ENCODE measurements at regions of chr2 and their contacts with region 1.

Region 1: DNA sequence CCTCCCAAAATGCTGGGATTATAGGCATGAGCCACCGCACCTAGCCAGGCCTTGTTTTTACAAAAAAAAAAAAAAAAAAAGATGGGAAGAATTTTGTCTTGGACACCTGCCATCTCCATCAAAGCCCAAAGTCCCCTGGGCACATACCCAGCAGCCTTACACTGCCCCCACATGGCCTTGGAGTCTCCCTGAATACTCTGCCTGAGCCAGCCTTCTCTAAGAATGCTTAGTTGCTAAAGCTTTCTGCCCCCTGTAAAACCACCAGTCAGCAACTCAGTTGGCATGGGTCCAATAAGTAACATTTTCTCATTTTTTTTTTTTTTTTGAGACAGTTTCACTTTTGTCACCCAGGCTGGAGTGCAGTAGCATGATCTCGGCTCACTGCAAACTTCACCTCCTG is 40.6 kb downstream of the SPC25 start:
- DNase-seq: peak; percentile 87
- H3K4me3 Mint-ChIP-seq: no peak overlapping the region
- H3K27ac Mint-ChIP-seq: peak overlapping the region; percentile 14
- H3K4me1 Mint-ChIP-seq: peaks cover 33% of the 10 kb centered on the region
- H3K27me3 Mint-ChIP-seq: no peaks in the 10 kb centered on the region
- CTCF ChIP-seq: peak; percentile 67

Region 2: GRCh38 chr2:168773719-168774521 is 75.7 kb before region 1 on chr2:
- CTCF ChIA-PET with region 1: interaction called, 4 read pairs
- intact Hi-C with region 1: loop called (anchors 1 kb)
- DNase-seq: peak; percentile 85
- H3K4me3 Mint-ChIP-seq: no peak overlapping the region
- H3K27ac Mint-ChIP-seq: no peak overlapping the region
- H3K4me1 Mint-ChIP-seq: no peaks in the 10 kb centered on the region
- H3K27me3 Mint-ChIP-seq: no peaks in the 10 kb centered on the region
- CTCF ChIP-seq: peak; percentile 94

Region 3: DNA sequence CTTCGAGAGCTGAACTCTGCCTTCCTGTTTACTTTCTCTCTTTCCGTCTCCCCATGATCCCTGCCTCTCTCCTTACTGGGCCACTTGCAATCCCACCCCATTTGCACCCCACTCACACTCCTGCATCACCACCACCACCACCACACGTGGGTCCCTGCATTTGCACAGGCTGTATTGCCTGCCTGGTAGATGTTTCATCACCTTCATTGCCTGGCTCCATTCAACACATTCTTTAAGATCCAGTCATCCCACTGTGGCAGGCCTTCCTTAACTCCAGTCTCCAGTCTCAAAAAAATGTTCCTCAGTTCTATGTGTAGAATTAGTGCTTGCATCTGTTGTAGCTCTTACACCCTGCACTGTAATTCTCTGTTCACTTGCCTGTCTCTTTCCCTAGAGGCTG is 33.2 kb before region 1 on chr2:
- CTCF ChIA-PET with region 1: interaction called, 3 read pairs
- intact Hi-C with region 1: loop called (anchors 1 kb)
- DNase-seq: peak; percentile 65
- H3K4me3 Mint-ChIP-seq: peak overlapping the region; percentile 14
- H3K27ac Mint-ChIP-seq: peak overlapping the region; percentile 78
- H3K4me1 Mint-ChIP-seq: peaks cover 57% of the 10 kb centered on the region
- H3K27me3 Mint-ChIP-seq: no peaks in the 10 kb centered on the region
- CTCF ChIP-seq: no peak

Region 4: GRCh38 chr2:168874368-168875054 is 24.9 kb after region 1 on chr2:
- CTCF ChIA-PET with region 1: no interaction called
- intact Hi-C with region 1: no loop called
- DNase-seq: no peak
- H3K4me3 Mint-ChIP-seq: no peak overlapping the region
- H3K27ac Mint-ChIP-seq: no peak overlapping the region
- H3K4me1 Mint-ChIP-seq: peaks cover 8% of the 10 kb centered on the region
- H3K27me3 Mint-ChIP-seq: no peaks in the 10 kb centered on the region
- CTCF ChIP-seq: no peak

Region 5: GRCh38 chr2:168920504-168921157 is 71.0 kb after region 1 on chr2:
- CTCF ChIA-PET with region 1: no interaction called
- intact Hi-C with region 1: loop called (anchors 2 kb)
- DNase-seq: peak; percentile 44
- H3K4me3 Mint-ChIP-seq: no peak overlapping the region
- H3K27ac Mint-ChIP-seq: no peak overlapping the region
- H3K4me1 Mint-ChIP-seq: peaks cover 14% of the 10 kb centered on the region
- H3K27me3 Mint-ChIP-seq: no peaks in the 10 kb centered on the region
- CTCF ChIP-seq: peak; percentile 68

Region 6: GRCh38 chr2:168976034-168976654 is 126.5 kb after region 1 on chr2:
- CTCF ChIA-PET with region 1: no interaction called
- intact Hi-C with region 1: no loop called
- DNase-seq: no peak
- H3K4me3 Mint-ChIP-seq: no peak overlapping the region
- H3K27ac Mint-ChIP-seq: peak overlapping the region; percentile 2
- H3K4me1 Mint-ChIP-seq: peaks cover 34% of the 10 kb centered on the region
- H3K27me3 Mint-ChIP-seq: no peaks in the 10 kb centered on the region
- CTCF ChIP-seq: no peak